Activated CD8-positive, alpha-beta T cell treated with anti-CD3 and anti-CD28 coated beads for 36 hours (primary cell): ENCODE measurements at regions of chr17 and their contacts with region 1.

Region 1: GRCh38 chr17:74379495-74380085 is 12.3 kb downstream of the GPR142 start:
- DNase-seq: peak; percentile 96
- ATAC-seq: peak; percentile 95
- H3K4me3 Mint-ChIP-seq: no peak overlapping the region
- H3K27ac Mint-ChIP-seq: no peak overlapping the region
- H3K4me1 Mint-ChIP-seq: no peaks in the 10 kb centered on the region
- H3K27me3 Mint-ChIP-seq: no peaks in the 10 kb centered on the region
- CTCF ChIP-seq: peak; percentile 94

Region 2: DNA sequence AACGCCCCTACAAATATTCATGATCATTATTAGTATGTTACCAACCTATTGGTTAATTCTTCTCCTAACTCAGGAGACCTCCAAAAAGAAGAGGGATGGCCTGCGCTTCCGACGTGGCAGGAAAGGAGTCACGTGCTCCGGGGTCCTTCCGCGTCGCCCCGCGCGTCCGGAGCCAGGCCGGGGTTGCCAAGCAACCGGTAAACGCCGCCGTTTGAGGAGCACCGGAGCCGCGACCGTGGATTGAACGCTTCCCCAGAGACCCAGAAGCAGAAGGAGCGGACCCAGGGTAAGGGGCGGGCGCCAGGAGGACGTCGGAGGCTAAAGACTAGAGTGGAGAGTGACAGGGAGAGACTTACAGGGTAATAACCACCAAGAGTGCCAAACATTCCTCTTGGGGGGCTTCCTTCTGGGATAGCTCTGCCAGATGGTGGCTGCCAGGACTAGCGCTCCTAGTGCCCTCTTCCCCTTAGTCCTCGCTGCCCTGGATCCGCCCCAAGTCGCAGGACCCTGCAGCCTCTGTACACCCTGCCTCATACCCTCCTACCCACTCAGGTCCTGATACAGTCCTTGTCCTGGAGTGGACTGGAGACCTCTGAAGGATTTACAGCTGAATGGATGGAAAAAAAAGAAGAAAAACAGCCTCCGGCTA is 105.4 kb before region 1 on chr17 and contains the start of gene DNAI2:
- CTCF ChIA-PET with region 1: no interaction called
- POLR2A ChIA-PET with region 1: no interaction called
- intact Hi-C with region 1: no loop called
- DNase-seq: peak; percentile 45
- ATAC-seq: peak; percentile 65
- H3K4me3 Mint-ChIP-seq: peak within 1 kb of the TSS; percentile 33
- H3K27ac Mint-ChIP-seq: peak within 1 kb of the TSS; percentile 38
- H3K4me1 Mint-ChIP-seq: peaks cover 13% of the 10 kb centered on the region
- H3K27me3 Mint-ChIP-seq: peaks cover 4% of the 10 kb centered on the region
- CTCF ChIP-seq: no peak
- total RNA-seq, gene DNAI2: 0.45 to 0.47 TPM

Region 3: DNA sequence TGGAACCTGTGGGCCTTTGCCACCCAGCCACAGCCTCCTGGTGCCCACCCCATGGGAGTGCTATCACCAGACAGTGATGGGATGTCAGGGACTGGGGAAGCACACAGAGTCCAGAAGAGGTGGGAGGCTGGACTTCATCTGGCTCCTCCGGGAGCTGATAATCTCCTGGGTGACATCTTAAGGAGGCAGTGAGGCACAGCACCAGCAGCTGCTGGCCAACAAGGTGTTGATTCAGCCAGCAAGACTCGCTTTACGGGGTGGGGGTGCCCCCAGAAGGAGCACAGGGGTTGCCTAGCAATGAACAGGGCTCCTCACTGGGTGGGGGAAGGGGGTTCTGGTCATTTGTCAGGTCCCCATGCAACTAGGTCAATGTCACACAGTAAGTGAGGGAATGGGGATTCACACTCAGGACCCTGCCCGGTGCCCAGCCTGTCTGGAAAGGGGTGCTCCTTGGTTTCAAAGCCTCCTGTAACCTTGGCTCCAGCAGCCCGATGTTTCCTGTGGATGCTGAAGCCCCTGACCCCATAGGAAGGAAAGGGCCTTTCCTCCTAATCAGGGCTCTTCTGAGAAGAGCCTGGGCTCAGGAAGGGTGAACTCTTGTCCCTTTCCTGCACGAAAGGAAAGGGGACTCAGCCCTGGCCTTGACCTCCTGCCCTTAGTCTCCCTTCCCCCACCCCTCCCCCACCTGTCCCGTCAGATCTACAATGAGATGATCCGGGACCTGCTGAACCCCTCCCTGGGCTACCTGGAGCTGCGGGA is 35.9 kb before region 1 on chr17:
- CTCF ChIA-PET with region 1: no interaction called
- POLR2A ChIA-PET with region 1: no interaction called
- intact Hi-C with region 1: no loop called
- DNase-seq: no peak
- ATAC-seq: no peak
- H3K4me3 Mint-ChIP-seq: no peak overlapping the region
- H3K27ac Mint-ChIP-seq: no peak overlapping the region
- H3K4me1 Mint-ChIP-seq: no peaks in the 10 kb centered on the region
- H3K27me3 Mint-ChIP-seq: peaks cover 2% of the 10 kb centered on the region
- CTCF ChIP-seq: no peak

Region 4: GRCh38 chr17:74368092-74369081 is 11.2 kb before region 1 on chr17:
- CTCF ChIA-PET with region 1: interaction called, 104 read pairs
- POLR2A ChIA-PET with region 1: no interaction called
- intact Hi-C with region 1: no loop called
- DNase-seq: peak; percentile 82
- ATAC-seq: peak; percentile 78
- H3K4me3 Mint-ChIP-seq: peak overlapping the region; percentile 7
- H3K27ac Mint-ChIP-seq: no peak overlapping the region
- H3K4me1 Mint-ChIP-seq: peaks cover 15% of the 10 kb centered on the region
- H3K27me3 Mint-ChIP-seq: no peaks in the 10 kb centered on the region
- CTCF ChIP-seq: peak; percentile 97

Region 5: DNA sequence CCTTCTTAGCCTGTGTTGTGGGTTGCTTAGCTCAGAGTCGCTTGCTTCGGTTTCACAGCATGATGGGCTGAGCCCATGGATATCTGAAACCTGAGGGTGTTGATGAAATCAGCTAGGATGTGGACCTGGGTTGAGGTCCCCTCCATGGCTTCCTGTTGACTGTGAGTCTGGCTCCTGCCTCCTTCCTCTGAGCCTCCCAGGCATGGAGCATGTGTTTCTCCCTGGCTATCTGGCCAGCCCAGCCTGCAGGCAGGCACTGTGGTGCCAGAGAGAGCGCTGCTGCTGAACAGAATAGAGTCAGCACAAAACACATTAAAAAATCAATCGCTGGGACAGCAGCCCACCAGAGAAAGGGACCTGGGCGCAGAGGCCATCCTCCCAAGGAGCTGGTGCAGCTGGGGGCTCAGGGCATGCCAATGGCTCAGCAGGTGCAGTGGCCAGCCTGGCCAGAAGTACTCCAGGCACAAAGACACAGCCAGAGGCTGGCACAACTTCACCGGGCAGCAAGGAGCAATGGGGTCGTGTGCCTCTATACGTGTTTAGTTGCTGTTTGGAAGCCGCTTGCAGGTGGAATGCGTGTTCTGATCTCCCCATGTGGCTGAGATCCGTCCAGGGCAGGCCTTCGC is 24.0 kb after region 1 on chr17:
- CTCF ChIA-PET with region 1: interaction called, 13 read pairs
- POLR2A ChIA-PET with region 1: no interaction called
- intact Hi-C with region 1: no loop called
- DNase-seq: no peak
- ATAC-seq: no peak
- H3K4me3 Mint-ChIP-seq: no peak overlapping the region
- H3K27ac Mint-ChIP-seq: no peak overlapping the region
- H3K4me1 Mint-ChIP-seq: no peaks in the 10 kb centered on the region
- H3K27me3 Mint-ChIP-seq: no peaks in the 10 kb centered on the region
- CTCF ChIP-seq: no peak

Region 6: DNA sequence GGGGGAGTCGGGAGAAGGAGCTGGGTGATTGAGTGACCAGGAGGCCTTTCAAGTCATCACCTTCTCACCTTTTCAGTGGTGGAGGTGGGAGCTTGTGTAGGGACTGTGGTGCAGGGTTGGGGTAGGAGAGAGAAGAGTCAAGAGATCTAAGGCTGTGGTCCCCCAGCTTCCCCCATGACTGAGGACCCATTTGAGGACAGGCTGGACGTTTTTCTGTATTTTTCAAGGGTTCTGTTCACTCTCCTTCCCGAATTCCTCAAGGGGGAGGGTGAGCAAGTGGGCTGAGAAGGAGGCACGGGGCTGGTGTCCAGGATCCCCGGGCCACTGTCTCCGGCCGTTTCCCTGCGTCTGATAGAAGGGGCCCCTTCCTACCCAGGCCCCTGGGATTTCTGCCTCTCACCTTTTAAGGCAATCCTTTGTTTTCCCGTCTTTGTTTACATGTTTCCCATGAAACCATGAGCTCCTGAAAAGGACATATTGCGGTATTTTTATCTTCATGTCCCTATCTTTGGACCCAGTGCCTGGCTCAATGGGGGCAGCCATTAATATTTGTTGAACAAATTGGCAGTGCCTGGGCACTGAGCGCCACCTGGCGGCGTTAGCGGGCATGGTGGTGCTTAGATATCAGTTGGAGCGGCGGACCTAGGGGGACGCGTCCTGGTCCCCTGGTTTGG is 77.7 kb after region 1 on chr17:
- CTCF ChIA-PET with region 1: interaction called, 133 read pairs
- POLR2A ChIA-PET with region 1: no interaction called
- intact Hi-C with region 1: loop called (anchors 1 kb)
- DNase-seq: peak; percentile 88
- ATAC-seq: peak; percentile 51
- H3K4me3 Mint-ChIP-seq: no peak overlapping the region
- H3K27ac Mint-ChIP-seq: no peak overlapping the region
- H3K4me1 Mint-ChIP-seq: peaks cover 12% of the 10 kb centered on the region
- H3K27me3 Mint-ChIP-seq: peaks cover 1% of the 10 kb centered on the region
- CTCF ChIP-seq: peak; percentile 90

Region 7: GRCh38 chr17:74485022-74485743 is 105.6 kb after region 1 on chr17:
- CTCF ChIA-PET with region 1: interaction called, 32 read pairs
- POLR2A ChIA-PET with region 1: no interaction called
- intact Hi-C with region 1: loop called (anchors 5 kb)
- DNase-seq: no peak
- ATAC-seq: no peak
- H3K4me3 Mint-ChIP-seq: no peak overlapping the region
- H3K27ac Mint-ChIP-seq: no peak overlapping the region
- H3K4me1 Mint-ChIP-seq: peaks cover 7% of the 10 kb centered on the region
- H3K27me3 Mint-ChIP-seq: no peaks in the 10 kb centered on the region
- CTCF ChIP-seq: no peak

Region 8: GRCh38 chr17:74532115-74532514 is 152.5 kb after region 1 on chr17:
- CTCF ChIA-PET with region 1: interaction called, 17 read pairs
- POLR2A ChIA-PET with region 1: interaction called, 3 read pairs
- intact Hi-C with region 1: loop called (anchors 10 kb)
- DNase-seq: peak; percentile 9
- ATAC-seq: peak; percentile 47
- H3K4me3 Mint-ChIP-seq: no peak overlapping the region
- H3K27ac Mint-ChIP-seq: no peak overlapping the region
- H3K4me1 Mint-ChIP-seq: peaks cover 7% of the 10 kb centered on the region
- H3K27me3 Mint-ChIP-seq: peaks cover 32% of the 10 kb centered on the region
- CTCF ChIP-seq: no peak